HepG2 (cell line): ENCODE measurements at regions of chr1 and their contacts with region 1.

Region 1: DNA sequence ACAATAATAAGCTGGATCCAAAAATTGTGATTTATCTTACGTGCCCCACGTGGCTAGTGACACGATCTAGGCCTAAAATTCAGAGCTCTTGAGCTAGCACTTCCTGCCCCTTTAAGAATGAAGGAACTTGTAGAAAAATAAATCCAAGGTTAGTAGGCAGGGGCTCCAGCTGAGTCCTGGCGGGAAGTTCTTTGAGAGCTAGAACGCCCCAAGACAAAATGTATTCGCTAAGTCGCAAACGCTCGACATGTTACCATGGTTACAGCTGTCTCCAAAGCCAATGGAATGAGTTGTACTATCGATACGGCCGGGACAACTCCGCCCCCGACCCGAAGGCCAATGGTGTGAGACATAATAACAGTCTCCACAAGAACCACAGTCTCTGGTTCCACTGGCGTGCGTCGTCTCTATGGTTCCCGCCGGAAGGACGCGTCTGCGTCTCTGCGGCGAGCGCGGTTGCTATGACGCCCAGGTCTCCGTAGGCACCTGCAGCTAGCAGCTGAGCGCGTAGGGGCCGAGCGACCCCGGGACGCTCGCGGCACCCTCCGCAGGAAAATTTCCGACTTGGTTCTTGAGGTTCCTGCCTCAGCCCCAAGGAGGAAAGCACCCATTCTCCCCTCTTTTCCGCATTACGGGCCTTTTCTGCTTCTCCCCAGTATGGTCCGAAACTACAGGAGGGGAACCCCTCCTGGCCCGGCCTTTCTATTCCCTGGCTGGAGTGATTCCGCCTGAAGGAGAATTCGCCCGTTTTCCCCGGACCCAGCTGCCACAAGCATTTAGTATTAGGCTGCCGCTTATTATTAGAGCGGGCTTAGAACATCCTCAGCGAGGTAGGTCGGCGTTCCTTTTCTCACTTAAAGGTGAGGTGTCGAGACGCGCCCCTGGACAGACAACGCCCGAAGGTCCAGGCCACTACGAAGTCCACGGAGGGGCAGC is at the start of gene CCDC30:
- DNase-seq: peak; percentile 97
- ATAC-seq: peak; percentile 99
- H3K4me3 ChIP-seq: peak within 1 kb of the TSS; percentile 65 to 85 (median 70)
- H3K27ac ChIP-seq: peak within 1 kb of the TSS; percentile 54
- H3K4me1 ChIP-seq: peaks cover 43% of the 10 kb centered on the region
- H3K27me3 ChIP-seq: no peaks in the 10 kb centered on the region
- CTCF ChIP-seq: no peak
- EP300 ChIP-seq: no peak
- POLR2A ChIP-seq: 0 out of 4 replicates have a peak, but pooled peaks of 1 of the 2 experiments have one; percentile 31
- RAD21 ChIP-seq: no peak
- total RNA-seq, gene CCDC30: 0.77 and 1.2 TPM in 2 replicates

Region 2: DNA sequence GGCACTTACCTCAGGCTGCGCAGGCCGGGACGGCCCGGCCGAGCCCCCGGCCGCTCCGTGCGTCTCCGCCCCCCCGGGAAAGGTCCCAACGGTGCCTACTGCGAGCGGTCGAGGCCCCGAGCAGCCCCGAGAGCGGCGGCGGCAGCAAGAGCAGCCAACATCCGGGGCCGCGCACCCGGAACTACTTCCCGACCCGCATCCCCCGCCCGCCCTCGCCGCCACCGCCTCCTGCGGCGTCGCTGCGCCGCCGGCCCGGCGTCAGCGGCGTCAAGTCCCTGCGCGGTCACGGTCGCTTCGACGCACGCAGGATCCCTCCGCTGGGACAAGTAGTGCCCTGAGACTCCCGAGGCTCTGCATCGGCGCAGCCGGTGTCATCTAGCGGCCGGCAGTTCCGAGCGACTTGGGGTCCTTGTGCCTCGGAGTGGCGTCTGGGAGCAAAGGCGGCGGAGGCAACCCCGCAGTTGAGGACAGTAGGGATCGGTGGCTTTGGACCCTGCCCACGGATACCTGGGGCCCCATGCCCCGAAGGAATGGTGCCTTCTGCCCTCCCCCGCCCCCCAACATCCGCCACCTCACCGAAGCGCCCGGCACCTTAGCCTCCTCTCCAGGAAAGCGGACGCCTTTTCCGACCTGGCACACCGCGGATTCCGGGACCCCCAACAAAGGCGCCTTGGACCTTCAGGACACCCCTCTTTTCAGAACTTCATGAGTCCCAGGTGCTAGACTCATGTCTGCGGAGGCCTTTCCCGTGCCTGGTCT is 127.9 kb before region 1 on chr1 and contains the start of gene FOXJ3:
- CTCF ChIA-PET with region 1: no interaction called
- POLR2A ChIA-PET with region 1: no interaction called
- in situ Hi-C with region 1: no loop called
- intact Hi-C with region 1: loop called (anchors 5 kb)
- DNase-seq: peak; percentile 84
- ATAC-seq: peak; percentile 88
- H3K4me3 ChIP-seq: peak within 1 kb of the TSS; percentile 86 to 97 (median 95)
- H3K27ac ChIP-seq: peak within 1 kb of the TSS; percentile 93
- H3K4me1 ChIP-seq: peaks cover 50% of the 10 kb centered on the region
- H3K27me3 ChIP-seq: no peaks in the 10 kb centered on the region; a peak in 1 of 5 replicates
- CTCF ChIP-seq: peak; percentile 59
- EP300 ChIP-seq: peak in 1 of 2 experiments; percentile 56; a peak in 1 of 4 replicates
- POLR2A ChIP-seq: peak; percentile 84 to 87
- RAD21 ChIP-seq: 0 out of 2 replicates have a peak, but pooled peaks have one; percentile 51
- total RNA-seq, gene FOXJ3: 15.4 and 16.6 TPM in 2 replicates